ENCODE measurements at regions of chr7 and their contacts with region 1.

Region 1: DNA sequence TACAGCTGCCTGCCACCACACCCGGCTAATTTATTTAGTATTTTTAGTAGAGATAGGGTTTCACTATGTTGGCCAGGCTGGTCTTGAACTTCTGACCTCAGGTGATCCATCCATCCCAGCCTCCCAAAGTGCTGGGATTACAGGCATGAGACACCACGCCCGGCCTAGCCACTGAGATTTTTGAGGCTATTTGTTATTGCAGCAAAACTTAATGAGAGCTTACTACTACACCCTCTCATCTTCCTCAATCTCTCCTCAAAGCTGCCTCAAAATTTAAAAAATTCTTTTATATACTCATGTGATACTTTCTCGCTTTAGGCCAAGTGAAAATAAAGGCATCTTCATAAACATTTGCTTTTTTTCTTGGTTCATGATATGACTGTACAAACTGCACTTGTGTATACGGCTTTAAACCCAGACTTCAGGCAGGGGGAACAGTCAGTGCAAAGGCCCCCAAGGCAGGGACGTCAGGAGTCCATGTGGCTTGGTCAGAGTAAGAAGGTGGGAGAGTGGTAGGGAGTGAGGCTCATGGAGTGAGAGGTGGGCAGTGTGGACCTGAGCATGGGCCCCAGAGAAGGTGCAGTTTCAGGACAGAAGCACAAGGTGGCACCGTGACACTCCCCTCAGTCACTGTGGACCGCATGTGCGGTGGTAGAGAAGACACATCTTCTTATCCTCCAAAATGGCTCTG is 55.5 kb downstream of the SYPL1 start:
- DNase-seq: peak; percentile 63 to 74
- ATAC-seq: peak; percentile 88

Region 2: DNA sequence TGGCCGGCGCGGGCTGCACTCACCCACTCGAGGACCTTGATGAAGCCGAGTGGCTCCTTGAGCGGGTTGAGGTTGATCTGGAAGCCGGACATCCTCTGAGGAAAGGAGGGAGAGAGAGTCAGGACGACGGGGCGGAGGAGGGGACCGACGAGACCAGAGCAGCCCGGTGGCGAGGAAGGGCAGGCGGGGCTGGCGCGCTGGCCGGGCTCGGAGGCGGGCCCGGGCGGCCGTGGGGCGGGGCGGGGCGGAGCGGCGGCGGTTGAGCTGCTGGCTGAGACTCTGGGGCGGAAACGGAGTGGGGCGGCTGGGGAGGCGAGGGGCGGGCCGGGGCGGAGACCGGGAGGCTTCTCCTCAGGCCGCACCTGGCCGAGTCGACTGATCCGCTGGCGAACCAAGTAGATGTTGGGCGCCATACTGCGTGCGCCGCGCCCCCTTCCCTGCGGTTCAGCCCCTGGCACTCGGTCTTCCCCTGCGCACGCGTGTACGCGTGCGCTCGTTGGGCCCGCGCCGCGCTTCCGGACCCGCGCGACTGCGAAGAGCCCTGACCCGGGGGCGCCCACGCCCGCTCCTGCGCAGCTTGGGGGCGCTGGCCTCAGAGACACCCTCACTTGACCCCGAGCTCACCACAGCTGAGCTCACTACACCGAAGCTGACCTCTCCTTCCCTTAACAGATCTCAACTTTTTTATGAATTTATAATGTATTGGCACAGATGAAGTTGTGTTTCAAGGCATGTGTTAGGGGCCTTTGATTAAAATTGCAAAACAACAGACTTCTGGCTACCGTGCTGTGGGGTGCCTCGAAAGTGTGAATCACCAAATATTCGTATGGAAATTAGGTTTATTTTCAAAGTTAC is 55.7 kb after region 1 on chr7 and contains the start of gene SYPL1:
- intact Hi-C with region 1: loop called in 1 of 2 experiments (anchors 5 kb)
- DNase-seq: peak; percentile 94 to 95
- ATAC-seq: peak; percentile 91
- total RNA-seq, gene SYPL1: 71.9 to 84.2 TPM

Region 3: DNA sequence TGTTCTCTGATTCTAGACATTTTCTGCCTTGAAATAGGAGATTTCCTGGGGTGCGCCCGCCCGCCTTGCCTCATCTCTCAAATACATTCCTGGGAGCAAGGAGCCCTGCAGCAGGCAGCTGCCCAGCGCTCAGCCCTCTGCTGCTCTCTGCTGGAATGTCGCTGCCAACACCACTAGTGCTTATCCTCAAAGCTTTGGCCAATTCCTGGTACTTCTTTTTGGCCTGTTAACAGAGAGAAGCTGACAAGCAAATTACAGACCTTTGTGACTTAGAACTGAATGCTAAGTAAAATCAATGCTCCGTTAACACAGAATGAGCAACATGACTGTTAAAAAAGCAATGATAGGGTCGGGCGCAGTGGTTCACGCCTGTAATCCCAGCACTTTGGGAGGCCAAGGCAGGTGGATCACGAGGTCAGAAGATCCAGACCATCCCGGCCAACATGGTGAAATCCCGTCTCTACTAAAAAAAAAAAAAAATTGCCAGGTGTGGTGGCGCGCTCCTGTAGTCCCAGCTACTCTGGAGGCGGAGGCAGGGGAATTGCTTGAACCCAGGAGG is 97.3 kb after region 1 on chr7:
- intact Hi-C with region 1: loop called (anchors 2 to 5 kb)
- DNase-seq: peak; percentile 63 to 83
- ATAC-seq: peak; percentile 99

Measured in left colon (tissue), 2 donors.